Ovary (tissue), 10 donors: ENCODE measurements at regions of chr6 and their contacts with region 1.

Region 1: GRCh38 chr6:158226655-158227512 is 58.7 kb downstream of the GTF2H5 start:
- DNase-seq: no peak
- H3K4me3 ChIP-seq: no peak overlapping the region
- H3K27ac ChIP-seq: no peak overlapping the region
- H3K4me1 ChIP-seq: no peaks in the 10 kb centered on the region
- H3K27me3 ChIP-seq: no peaks in the 10 kb centered on the region
- CTCF ChIP-seq: no peak
- EP300 ChIP-seq: no peak
- POLR2A ChIP-seq: no peak

Region 2: GRCh38 chr6:158109744-158110143 is 117.1 kb before region 1 on chr6:
- intact Hi-C with region 1: no loop called
- DNase-seq: no peak
- H3K4me3 ChIP-seq: no peak overlapping the region
- H3K27ac ChIP-seq: no peak overlapping the region
- H3K4me1 ChIP-seq: no peaks in the 10 kb centered on the region
- H3K27me3 ChIP-seq: no peaks in the 10 kb centered on the region
- CTCF ChIP-seq: no peak
- EP300 ChIP-seq: no peak
- POLR2A ChIP-seq: no peak

Region 3: DNA sequence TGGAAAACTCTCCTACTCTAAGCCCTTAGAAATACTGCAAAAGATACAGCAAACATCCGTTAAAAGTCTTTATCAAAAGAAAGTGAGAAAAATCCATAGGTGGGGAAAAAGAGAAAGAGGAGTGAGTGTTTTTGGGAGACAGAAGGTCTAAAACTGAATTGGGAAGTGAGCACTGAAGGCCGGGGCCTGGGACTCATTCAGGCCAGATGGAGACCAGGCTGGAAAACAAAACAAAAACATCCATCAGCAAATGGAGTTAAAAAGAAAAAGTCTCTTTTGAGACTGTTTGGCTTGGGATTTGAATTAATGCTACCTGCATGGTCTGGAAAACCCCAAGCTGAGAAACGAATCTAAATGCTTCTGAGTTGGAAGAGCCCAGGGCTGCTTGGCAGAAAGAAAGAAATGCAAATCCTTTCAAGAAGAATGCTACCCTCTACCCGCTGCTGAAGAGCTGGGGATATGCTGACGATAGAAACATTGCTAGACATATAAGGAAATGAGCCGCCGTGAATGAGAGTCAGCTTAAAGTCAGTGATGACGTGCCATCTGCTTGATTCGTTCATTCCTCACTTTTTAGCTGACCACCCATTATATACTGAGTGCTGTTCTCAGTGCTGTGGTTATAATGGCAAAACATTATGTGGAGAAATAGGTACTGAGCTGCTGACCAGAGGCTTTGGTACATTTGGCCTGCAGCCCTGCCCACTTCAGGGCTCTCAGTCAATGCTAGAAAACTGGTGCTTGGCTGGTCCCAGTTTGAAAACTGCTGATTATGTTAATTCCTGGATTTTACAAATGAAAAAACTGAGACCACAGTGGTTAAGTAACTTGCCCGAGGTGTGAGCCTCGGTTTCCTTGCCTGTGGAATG is 57.4 kb after region 1 on chr6:
- intact Hi-C with region 1: no loop called
- DNase-seq: peak in 1 of 5 donors; percentile 29
- H3K4me3 ChIP-seq: no peak overlapping the region
- H3K27ac ChIP-seq: peak overlapping the region in 1 of 2 donors; percentile 31
- H3K4me1 ChIP-seq: peaks cover 1% of the 10 kb centered on the region
- H3K27me3 ChIP-seq: no peaks in the 10 kb centered on the region
- CTCF ChIP-seq: no peak
- EP300 ChIP-seq: no peak
- POLR2A ChIP-seq: no peak

Region 4: DNA sequence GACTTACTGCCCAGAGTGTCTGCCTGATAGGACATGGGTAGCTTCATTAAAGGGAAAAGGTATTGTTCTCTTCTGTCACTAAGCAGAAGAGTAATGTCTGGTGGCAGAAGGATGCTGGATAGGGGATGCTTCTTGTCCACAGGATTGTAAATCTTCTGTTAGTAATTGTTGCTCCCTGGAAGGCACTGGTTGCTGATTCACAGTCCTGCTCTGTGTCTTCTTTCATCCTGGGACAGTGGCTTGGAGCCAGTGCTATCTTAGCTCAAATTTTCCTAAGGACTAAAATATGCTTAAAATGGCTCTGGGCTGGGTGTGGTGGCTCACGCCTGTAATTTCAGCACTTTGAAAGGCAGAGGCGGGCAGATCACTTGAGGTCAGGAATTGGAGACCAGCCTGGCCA is 470.9 kb after region 1 on chr6:
- intact Hi-C with region 1: loop called in 2 of 4 experiments (anchors 5 kb)
- DNase-seq: no peak
- H3K4me3 ChIP-seq: no peak overlapping the region
- H3K27ac ChIP-seq: no peak overlapping the region
- H3K4me1 ChIP-seq: no peaks in the 10 kb centered on the region
- H3K27me3 ChIP-seq: no peaks in the 10 kb centered on the region
- CTCF ChIP-seq: no peak
- EP300 ChIP-seq: no peak
- POLR2A ChIP-seq: no peak